ENCODE measurements at regions of chr5 and their contacts with region 1.

Region 1: GRCh38 chr5:112174959-112175594 is 244.0 kb downstream of the EPB41L4A start:
- DNase-seq: peak in 1 of 2 donors; percentile 40
- ATAC-seq: peak; percentile 46 to 78 (median 65)
- H3K4me3 ChIP-seq: no peak overlapping the region
- H3K27ac ChIP-seq: no peak overlapping the region
- H3K4me1 ChIP-seq: peaks cover 0 to 6% (median 0%) of the 10 kb centered on the region in 9 donors
- H3K27me3 ChIP-seq: no peaks in the 10 kb centered on the region
- CTCF ChIP-seq: peak; percentile 45 to 87 (median 69)

Region 2: DNA sequence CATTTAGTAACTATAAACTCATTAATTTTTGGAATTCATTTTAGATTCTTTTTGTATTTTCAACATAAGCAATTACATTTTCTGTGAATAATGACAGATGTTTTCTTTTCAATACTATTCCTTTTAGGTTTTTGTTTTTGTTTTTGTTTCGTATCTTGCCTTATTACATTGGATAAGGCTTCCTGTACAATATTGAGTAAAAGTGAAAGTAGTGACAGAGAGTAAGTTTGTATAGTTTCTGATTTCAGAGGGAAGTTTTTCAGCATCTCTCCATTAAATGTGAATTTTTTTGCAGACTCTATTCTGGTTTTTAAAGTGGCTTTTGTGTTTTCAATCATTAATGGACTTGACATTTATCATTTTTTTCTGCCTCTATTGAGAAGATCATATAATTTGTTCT is 963.7 kb before region 1 on chr5:
- intact Hi-C with region 1: no loop called
- DNase-seq: no peak
- ATAC-seq: no peak
- H3K4me3 ChIP-seq: no peak overlapping the region
- H3K27ac ChIP-seq: no peak overlapping the region
- H3K4me1 ChIP-seq: no peaks in the 10 kb centered on the region
- H3K27me3 ChIP-seq: peaks cover 0 to 6% (median 0%) of the 10 kb centered on the region in 7 donors
- CTCF ChIP-seq: no peak

Region 3: DNA sequence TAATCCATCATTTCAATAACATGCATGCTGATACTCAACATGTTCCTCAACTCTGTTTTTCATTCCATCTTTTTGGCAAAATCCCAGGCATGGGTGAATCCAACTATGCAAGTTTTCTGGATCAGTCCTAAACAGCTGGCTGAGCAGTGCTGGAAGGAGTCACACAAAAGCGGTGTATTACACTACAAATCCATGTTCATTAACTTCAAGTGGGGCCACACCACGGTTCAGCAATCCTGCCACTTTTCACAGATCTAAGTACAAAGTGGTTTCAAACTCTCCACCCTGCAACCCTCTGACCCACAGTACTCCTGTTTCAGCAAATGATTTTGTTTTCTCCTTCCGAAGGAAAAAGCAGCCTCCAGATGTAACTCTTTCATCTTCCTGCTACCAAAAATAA is 21.5 kb after region 1 on chr5:
- intact Hi-C with region 1: no loop called
- DNase-seq: no peak
- ATAC-seq: no peak
- H3K4me3 ChIP-seq: no peak overlapping the region
- H3K27ac ChIP-seq: no peak overlapping the region
- H3K4me1 ChIP-seq: peaks cover 0 to 6% (median 0%) of the 10 kb centered on the region in 9 donors
- H3K27me3 ChIP-seq: no peaks in the 10 kb centered on the region
- CTCF ChIP-seq: no peak

Region 4: GRCh38 chr5:112210430-112211005 is 35.4 kb after region 1 on chr5:
- intact Hi-C with region 1: no loop called
- DNase-seq: peak in 1 of 2 donors; percentile 49
- ATAC-seq: peak in 6 of 8 donors; percentile 52 to 68 (median 62)
- H3K4me3 ChIP-seq: no peak overlapping the region
- H3K27ac ChIP-seq: no peak overlapping the region
- H3K4me1 ChIP-seq: peaks cover 0 to 9% (median 3%) of the 10 kb centered on the region in 9 donors
- H3K27me3 ChIP-seq: no peaks in the 10 kb centered on the region
- CTCF ChIP-seq: peak; percentile 39 to 77 (median 63)

Region 5: DNA sequence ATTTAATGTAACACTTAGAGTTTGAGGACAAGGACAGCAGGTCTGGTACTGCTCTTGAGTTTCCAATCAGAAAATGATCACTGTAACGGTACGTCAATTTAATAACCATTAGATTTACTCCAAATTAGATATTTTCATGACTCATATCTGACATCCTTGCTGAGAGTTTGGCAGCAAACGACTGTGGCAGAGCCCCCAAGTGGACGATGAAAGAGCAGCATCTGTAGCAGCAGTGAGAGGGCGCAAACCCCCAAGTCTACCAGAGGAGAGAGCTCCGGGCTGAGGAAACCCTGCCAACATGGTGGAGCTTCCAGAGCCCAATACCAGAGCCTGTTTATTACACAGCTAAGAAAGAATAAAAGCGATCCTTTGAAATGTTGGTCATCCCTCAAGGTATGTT is 317.2 kb after region 1 on chr5:
- intact Hi-C with region 1: loop called in 1 of 10 experiments (anchors 10 kb)
- DNase-seq: peak; percentile 25 to 46
- ATAC-seq: peak in 5 of 8 donors; percentile 70 to 95 (median 85)
- H3K4me3 ChIP-seq: no peak overlapping the region
- H3K27ac ChIP-seq: no peak overlapping the region
- H3K4me1 ChIP-seq: no peaks in the 10 kb centered on the region
- H3K27me3 ChIP-seq: no peaks in the 10 kb centered on the region
- CTCF ChIP-seq: peak; percentile 19 to 80 (median 59)

Region 6: DNA sequence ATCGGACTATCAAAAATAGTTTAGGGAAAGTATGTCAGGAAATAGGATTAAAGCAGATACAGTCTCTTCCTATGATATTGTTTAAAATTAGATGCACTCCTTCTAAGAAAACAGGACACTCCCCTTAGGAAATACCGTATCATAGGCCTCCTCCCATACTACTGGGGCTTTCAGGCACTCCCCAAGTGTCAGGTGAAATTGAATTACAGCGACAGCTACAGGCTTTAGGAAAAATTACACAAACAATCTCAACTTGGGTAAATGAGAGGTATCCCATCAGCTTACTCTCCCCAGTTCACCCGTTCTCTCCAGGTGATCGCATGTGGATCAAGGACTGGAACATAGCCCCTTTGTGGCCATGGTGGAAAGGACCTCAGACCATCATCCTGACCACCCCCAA is 354.4 kb after region 1 on chr5:
- intact Hi-C with region 1: loop called in 3 of 10 experiments (anchors 5 to 10 kb)
- DNase-seq: no peak
- ATAC-seq: no peak
- H3K4me3 ChIP-seq: no peak overlapping the region
- H3K27ac ChIP-seq: no peak overlapping the region
- H3K4me1 ChIP-seq: no peaks in the 10 kb centered on the region
- H3K27me3 ChIP-seq: no peaks in the 10 kb centered on the region
- CTCF ChIP-seq: peak in 8 of 9 donors; percentile 10 to 57 (median 48)

Region 7: GRCh38 chr5:112757468-112758208 is 582.6 kb after region 1 on chr5:
- intact Hi-C with region 1: loop called in 2 of 10 experiments (anchors 10 kb)
- DNase-seq: no peak
- ATAC-seq: peak in 7 of 8 donors; percentile 69 to 86 (median 78)
- H3K4me3 ChIP-seq: no peak overlapping the region
- H3K27ac ChIP-seq: peak overlapping the region in 1 of 10 donors; percentile 58
- H3K4me1 ChIP-seq: peaks cover 0 to 14% (median 6%) of the 10 kb centered on the region in 9 donors
- H3K27me3 ChIP-seq: no peaks in the 10 kb centered on the region
- CTCF ChIP-seq: peak; percentile 70 to 90 (median 80)

Measured in heart right ventricle (tissue), 16 donors.